Activated CD4-positive, alpha-beta memory T cell treated with anti-CD3 and anti-CD28 coated beads for 36 hours (primary cell): ENCODE measurements at regions of chr14 and their contacts with region 1.

Region 1: GRCh38 chr14:77053046-77053841 is 24.7 kb upstream of the IRF2BPL start:
- DNase-seq: peak; percentile 85
- H3K4me3 Mint-ChIP-seq: no peak overlapping the region
- H3K27ac Mint-ChIP-seq: peak overlapping the region; percentile 23
- H3K4me1 Mint-ChIP-seq: peaks cover 23% of the 10 kb centered on the region
- H3K27me3 Mint-ChIP-seq: no peaks in the 10 kb centered on the region

Region 2: GRCh38 chr14:76647697-76648298 is 405.4 kb before region 1 on chr14:
- CTCF ChIA-PET with region 1: no interaction called
- POLR2A ChIA-PET with region 1: no interaction called
- intact Hi-C with region 1: no loop called
- DNase-seq: peak; percentile 22
- H3K4me3 Mint-ChIP-seq: no peak overlapping the region
- H3K27ac Mint-ChIP-seq: no peak overlapping the region
- H3K4me1 Mint-ChIP-seq: no peaks in the 10 kb centered on the region
- H3K27me3 Mint-ChIP-seq: peaks cover 5% of the 10 kb centered on the region

Region 3: GRCh38 chr14:76876076-76876475 is 177.2 kb before region 1 on chr14:
- CTCF ChIA-PET with region 1: interaction called, 94 read pairs
- POLR2A ChIA-PET with region 1: no interaction called
- intact Hi-C with region 1: loop called (anchors 5 kb)
- DNase-seq: peak; percentile 61
- H3K4me3 Mint-ChIP-seq: no peak overlapping the region
- H3K27ac Mint-ChIP-seq: no peak overlapping the region
- H3K4me1 Mint-ChIP-seq: peaks cover 2% of the 10 kb centered on the region
- H3K27me3 Mint-ChIP-seq: no peaks in the 10 kb centered on the region

Region 4: DNA sequence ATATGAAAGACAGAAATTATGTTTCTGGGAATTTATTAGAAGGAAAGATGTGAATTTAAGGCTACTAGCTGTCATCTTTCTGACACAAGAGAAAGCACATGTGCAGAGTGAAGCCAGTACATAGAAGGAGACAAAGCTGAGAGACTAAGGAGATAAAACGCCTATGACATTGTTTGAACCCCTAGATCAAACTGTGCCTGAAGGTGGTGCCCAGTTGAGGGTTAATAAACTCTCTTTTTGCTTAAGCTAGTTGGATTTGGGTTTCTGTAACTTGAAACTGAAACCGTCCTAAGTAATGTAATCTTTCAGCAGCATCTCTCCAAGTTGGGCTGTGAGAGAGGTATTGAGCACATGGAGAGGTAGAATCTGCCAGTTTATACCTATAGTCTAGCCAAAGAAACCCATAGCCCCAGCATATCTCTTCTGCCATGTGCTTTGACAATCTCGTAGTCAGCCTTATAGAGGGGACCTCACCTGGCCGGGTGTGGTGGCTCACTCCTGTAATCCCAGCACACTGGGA is 142.8 kb before region 1 on chr14:
- CTCF ChIA-PET with region 1: interaction called, 130 read pairs
- POLR2A ChIA-PET with region 1: interaction called, 3 read pairs
- intact Hi-C with region 1: loop called (anchors 1 kb)
- DNase-seq: no peak
- H3K4me3 Mint-ChIP-seq: no peak overlapping the region
- H3K27ac Mint-ChIP-seq: no peak overlapping the region
- H3K4me1 Mint-ChIP-seq: peaks cover 19% of the 10 kb centered on the region
- H3K27me3 Mint-ChIP-seq: no peaks in the 10 kb centered on the region

Region 5: GRCh38 chr14:76941946-76942805 is 111.1 kb before region 1 on chr14:
- CTCF ChIA-PET with region 1: interaction called, 23 read pairs
- POLR2A ChIA-PET with region 1: no interaction called
- intact Hi-C with region 1: loop called (anchors 1 kb)
- DNase-seq: peak; percentile 50
- H3K4me3 Mint-ChIP-seq: no peak overlapping the region
- H3K27ac Mint-ChIP-seq: peak overlapping the region; percentile 67
- H3K4me1 Mint-ChIP-seq: peaks cover 24% of the 10 kb centered on the region
- H3K27me3 Mint-ChIP-seq: no peaks in the 10 kb centered on the region

Region 6: GRCh38 chr14:76962303-76962660 is 91.0 kb before region 1 on chr14:
- CTCF ChIA-PET with region 1: interaction called, 30 read pairs
- POLR2A ChIA-PET with region 1: no interaction called
- intact Hi-C with region 1: no loop called
- DNase-seq: no peak
- H3K4me3 Mint-ChIP-seq: peak overlapping the region; percentile 77
- H3K27ac Mint-ChIP-seq: peak overlapping the region; percentile 98
- H3K4me1 Mint-ChIP-seq: peaks cover 82% of the 10 kb centered on the region
- H3K27me3 Mint-ChIP-seq: peaks cover 3% of the 10 kb centered on the region

Region 7: GRCh38 chr14:77028384-77029231 is 24.6 kb before region 1 on chr14 and contains the start of gene IRF2BPL:
- CTCF ChIA-PET with region 1: interaction called, 30 read pairs
- POLR2A ChIA-PET with region 1: interaction called, 3 read pairs
- intact Hi-C with region 1: loop called (anchors 2 kb)
- DNase-seq: peak; percentile 97
- H3K4me3 Mint-ChIP-seq: peak within 1 kb of the TSS; percentile 82
- H3K27ac Mint-ChIP-seq: peak within 1 kb of the TSS; percentile 97
- H3K4me1 Mint-ChIP-seq: peaks cover 50% of the 10 kb centered on the region
- H3K27me3 Mint-ChIP-seq: no peaks in the 10 kb centered on the region
- total RNA-seq, gene IRF2BPL: 38.5 to 41.1 TPM

Region 8: DNA sequence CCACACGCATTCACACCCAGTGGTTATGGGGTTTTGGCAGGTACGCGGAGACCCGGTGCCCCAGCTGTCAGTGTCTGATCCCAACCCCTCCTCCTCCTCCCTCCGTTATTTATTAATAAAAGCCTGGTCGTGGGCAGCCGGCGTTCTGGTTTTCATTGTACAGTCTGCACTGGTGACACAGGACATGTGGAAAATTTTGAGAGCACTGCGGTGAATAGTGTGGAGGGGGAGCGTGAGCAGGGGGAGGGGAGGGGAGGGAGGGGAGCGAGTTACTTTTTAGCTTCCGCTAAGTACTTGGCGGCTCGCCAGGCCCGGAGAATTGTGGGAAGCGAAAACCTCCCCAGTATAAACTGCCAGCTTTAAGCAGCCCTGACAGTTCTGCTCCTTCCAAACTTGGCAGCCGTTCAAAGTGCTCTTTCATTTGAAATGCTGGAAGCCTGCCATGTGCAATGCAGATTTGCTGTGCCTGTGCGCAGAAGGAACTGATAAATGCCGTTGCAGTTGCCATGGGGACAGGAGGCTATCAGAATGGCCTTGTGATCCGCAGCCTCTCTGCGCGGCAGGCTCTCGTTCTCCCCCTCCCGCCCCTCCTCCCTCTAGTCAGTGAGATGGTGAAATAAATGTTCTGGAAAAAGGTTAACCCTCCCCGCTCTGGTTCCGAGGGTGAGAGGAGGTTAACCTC is 13.0 kb before region 1 on chr14:
- CTCF ChIA-PET with region 1: interaction called, 54 read pairs
- POLR2A ChIA-PET with region 1: no interaction called
- intact Hi-C with region 1: no loop called
- DNase-seq: peak; percentile 97
- H3K4me3 Mint-ChIP-seq: peak overlapping the region; percentile 77
- H3K27ac Mint-ChIP-seq: peak overlapping the region; percentile 99
- H3K4me1 Mint-ChIP-seq: peaks cover 88% of the 10 kb centered on the region
- H3K27me3 Mint-ChIP-seq: no peaks in the 10 kb centered on the region